GM12878 (cell line): ENCODE measurements at regions of chr3 and their contacts with region 1.

Region 1: GRCh38 chr3:179562591-179563270 is at the start of gene ACTL6A:
- DNase-seq: peak; percentile 98
- ATAC-seq: peak; percentile 96
- H3K4me3 ChIP-seq: peak within 1 kb of the TSS; percentile 96
- H3K27ac ChIP-seq: peak within 1 kb of the TSS; percentile 75
- H3K4me1 ChIP-seq: no peaks in the 10 kb centered on the region
- H3K27me3 ChIP-seq: no peaks in the 10 kb centered on the region; a peak in 1 of 4 replicates
- CTCF ChIP-seq: no peak
- EP300 ChIP-seq: 0 out of 4 replicates have a peak, but pooled peaks of 1 of the 2 experiments have one; percentile 9
- POLR2A ChIP-seq: peak; percentile 92
- RAD21 ChIP-seq: no peak
- polyA plus RNA-seq, gene ACTL6A: 102 to 123 TPM

Region 2: DNA sequence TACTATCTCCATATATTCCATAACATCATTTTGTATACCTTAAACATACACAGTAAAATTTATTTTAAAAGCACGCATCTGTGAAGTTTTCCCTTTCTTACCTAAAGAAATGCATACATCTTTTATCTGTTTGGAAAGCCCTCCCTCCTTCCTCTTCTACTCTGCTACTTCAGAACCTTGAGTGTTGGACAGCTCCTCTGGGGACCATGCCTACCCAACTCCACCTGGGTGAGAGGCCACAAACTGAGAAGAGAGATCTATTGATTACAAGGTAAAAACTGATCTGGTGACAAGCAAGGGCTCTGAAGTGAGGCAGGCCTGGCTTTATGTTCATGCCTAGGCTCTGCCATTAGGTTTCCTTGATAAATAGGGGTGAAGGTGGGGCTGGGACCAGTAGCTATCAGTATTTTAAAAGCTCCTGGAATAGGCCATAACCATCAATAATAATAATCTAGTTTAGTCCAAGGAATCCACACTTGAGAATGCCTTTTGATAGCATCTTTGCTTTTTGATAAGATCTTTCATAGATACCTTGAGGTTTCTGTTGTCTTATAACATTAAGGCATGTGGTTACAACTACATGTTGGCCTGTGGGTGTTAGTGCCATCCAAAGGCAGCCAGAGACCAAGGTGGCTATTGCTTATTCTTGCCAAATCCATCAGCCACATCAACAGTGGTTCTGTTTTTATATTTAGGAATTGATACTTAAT is 877.7 kb before region 1 on chr3:
- CTCF ChIA-PET with region 1: no interaction called
- POLR2A ChIA-PET with region 1: no interaction called
- RAD21 ChIA-PET with region 1: no interaction called
- SMC1A ChIA-PET with region 1: no interaction called
- in situ Hi-C with region 1: no loop called
- intact Hi-C with region 1: no loop called
- DNase-seq: no peak
- ATAC-seq: peak; percentile 68
- H3K4me3 ChIP-seq: no peak overlapping the region
- H3K27ac ChIP-seq: no peak overlapping the region
- H3K4me1 ChIP-seq: no peaks in the 10 kb centered on the region
- H3K27me3 ChIP-seq: no peaks in the 10 kb centered on the region
- CTCF ChIP-seq: no peak
- EP300 ChIP-seq: no peak
- POLR2A ChIP-seq: no peak
- RAD21 ChIP-seq: no peak

Region 3: GRCh38 chr3:179098388-179099077 is 464.2 kb before region 1 on chr3:
- CTCF ChIA-PET with region 1: no interaction called
- POLR2A ChIA-PET with region 1: no interaction called
- RAD21 ChIA-PET with region 1: interaction called, 3 read pairs
- SMC1A ChIA-PET with region 1: no interaction called
- in situ Hi-C with region 1: no loop called
- intact Hi-C with region 1: loop called (anchors 10 kb)
- DNase-seq: no peak
- ATAC-seq: peak; percentile 21; the same call in 2 of the 3 replicates
- H3K4me3 ChIP-seq: no peak overlapping the region
- H3K27ac ChIP-seq: no peak overlapping the region
- H3K4me1 ChIP-seq: no peaks in the 10 kb centered on the region
- H3K27me3 ChIP-seq: no peaks in the 10 kb centered on the region
- CTCF ChIP-seq: no peak
- EP300 ChIP-seq: no peak
- POLR2A ChIP-seq: no peak
- RAD21 ChIP-seq: peak; percentile 6; the same call in 1 of the 2 replicates

Region 4: DNA sequence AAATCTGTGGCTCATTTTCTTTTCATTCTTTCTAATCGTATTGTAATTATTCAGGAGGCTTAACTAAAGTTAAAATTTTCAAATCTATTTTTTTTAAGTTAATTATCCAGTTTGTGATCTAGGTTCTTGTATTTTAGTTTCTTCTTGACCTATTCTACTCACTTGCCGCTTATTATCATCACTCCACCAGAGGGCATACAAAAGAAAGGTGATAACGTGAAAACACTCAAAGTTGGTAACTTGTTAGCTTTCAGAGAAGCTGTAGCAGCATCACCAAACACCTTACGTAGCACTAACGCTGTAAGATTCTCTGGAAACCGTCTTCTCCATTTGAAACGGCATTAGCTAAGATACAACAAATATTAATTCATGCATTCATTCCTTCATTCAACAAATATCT is 116.2 kb before region 1 on chr3:
- CTCF ChIA-PET with region 1: interaction called, 3 read pairs
- POLR2A ChIA-PET with region 1: no interaction called
- RAD21 ChIA-PET with region 1: interaction called, 4 read pairs
- SMC1A ChIA-PET with region 1: no interaction called
- in situ Hi-C with region 1: no loop called
- intact Hi-C with region 1: loop called (anchors 2 kb)
- DNase-seq: no peak
- ATAC-seq: no peak
- H3K4me3 ChIP-seq: no peak overlapping the region
- H3K27ac ChIP-seq: no peak overlapping the region
- H3K4me1 ChIP-seq: no peaks in the 10 kb centered on the region; the same call in 1 of the 2 replicates
- H3K27me3 ChIP-seq: no peaks in the 10 kb centered on the region
- CTCF ChIP-seq: peak; percentile 5 to 35 (median 29); a peak in 3 of 6 replicates
- EP300 ChIP-seq: no peak
- POLR2A ChIP-seq: no peak
- RAD21 ChIP-seq: peak; percentile 26; the same call in 1 of the 2 replicates

Region 5: DNA sequence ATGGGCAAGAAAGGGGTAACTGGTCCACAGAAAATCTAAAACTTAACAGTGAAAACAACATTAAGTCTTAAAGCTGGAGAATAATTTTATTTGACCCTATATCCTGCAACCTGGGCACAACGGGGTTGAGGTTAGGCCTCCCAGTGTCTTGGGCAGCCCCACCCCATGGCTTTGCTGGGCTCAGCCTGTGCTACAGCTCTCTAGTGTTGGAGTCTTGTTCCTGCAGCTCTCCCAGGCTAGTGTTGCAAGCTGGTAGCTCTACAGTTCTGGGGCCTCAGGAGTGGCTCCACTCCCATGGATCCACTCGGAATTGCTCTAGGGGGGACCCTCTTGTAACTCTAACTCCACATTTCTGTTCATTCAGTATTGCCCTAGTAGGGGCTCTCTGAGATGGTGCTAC is 86.5 kb before region 1 on chr3:
- CTCF ChIA-PET with region 1: no interaction called
- POLR2A ChIA-PET with region 1: no interaction called
- RAD21 ChIA-PET with region 1: no interaction called
- SMC1A ChIA-PET with region 1: no interaction called
- in situ Hi-C with region 1: no loop called
- intact Hi-C with region 1: no loop called
- DNase-seq: no peak
- ATAC-seq: peak; percentile 27; the same call in 1 of the 3 replicates
- H3K4me3 ChIP-seq: no peak overlapping the region
- H3K27ac ChIP-seq: no peak overlapping the region
- H3K4me1 ChIP-seq: no peaks in the 10 kb centered on the region
- H3K27me3 ChIP-seq: no peaks in the 10 kb centered on the region
- CTCF ChIP-seq: no peak
- EP300 ChIP-seq: no peak
- POLR2A ChIP-seq: no peak
- RAD21 ChIP-seq: no peak

Region 6: DNA sequence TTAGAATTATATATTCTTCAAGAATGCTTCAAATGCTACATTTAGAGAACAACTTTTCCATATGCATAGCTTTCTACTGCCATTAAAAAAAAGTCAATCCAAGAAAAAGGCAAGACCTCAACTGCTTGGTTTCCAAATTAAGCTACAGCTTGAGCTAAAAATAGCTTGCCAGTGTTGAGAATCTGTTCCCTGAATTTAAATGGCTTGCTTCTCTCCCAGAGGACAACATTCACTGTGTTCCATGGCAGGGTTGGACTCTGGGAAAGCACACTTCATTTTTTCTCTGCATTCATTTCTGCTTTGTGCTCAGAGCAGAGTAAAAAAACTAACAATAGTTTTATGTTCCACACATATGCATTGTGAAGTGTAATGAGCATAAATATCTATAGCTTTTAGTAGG is 50.4 kb before region 1 on chr3:
- CTCF ChIA-PET with region 1: no interaction called
- POLR2A ChIA-PET with region 1: no interaction called
- RAD21 ChIA-PET with region 1: no interaction called
- SMC1A ChIA-PET with region 1: no interaction called
- in situ Hi-C with region 1: no loop called
- intact Hi-C with region 1: no loop called
- DNase-seq: no peak
- ATAC-seq: no peak
- H3K4me3 ChIP-seq: no peak overlapping the region
- H3K27ac ChIP-seq: no peak overlapping the region
- H3K4me1 ChIP-seq: no peaks in the 10 kb centered on the region
- H3K27me3 ChIP-seq: no peaks in the 10 kb centered on the region
- CTCF ChIP-seq: no peak
- EP300 ChIP-seq: no peak
- POLR2A ChIP-seq: no peak
- RAD21 ChIP-seq: no peak